K562 (cell line): ENCODE measurements at regions of chr1 and their contacts with region 1.

Region 1: GRCh38 chr1:26717017-26717491 is 21.2 kb downstream of the ARID1A start:
- DNase-seq: peak in 2 of 4 experiments; percentile 35 to 58
- ATAC-seq: peak; percentile 1; the same call in 2 of the 3 replicates
- H3K4me3 ChIP-seq: no peak overlapping the region
- H3K27ac ChIP-seq: peak overlapping the region; percentile 2
- H3K4me1 ChIP-seq: peaks cover 48 to 75% of the 10 kb centered on the region in 2 experiments
- H3K27me3 ChIP-seq: no peaks in the 10 kb centered on the region
- CTCF ChIP-seq: no peak
- EP300 ChIP-seq: peak; percentile 86
- POLR2A ChIP-seq: no peak
- RAD21 ChIP-seq: no peak

Region 2: DNA sequence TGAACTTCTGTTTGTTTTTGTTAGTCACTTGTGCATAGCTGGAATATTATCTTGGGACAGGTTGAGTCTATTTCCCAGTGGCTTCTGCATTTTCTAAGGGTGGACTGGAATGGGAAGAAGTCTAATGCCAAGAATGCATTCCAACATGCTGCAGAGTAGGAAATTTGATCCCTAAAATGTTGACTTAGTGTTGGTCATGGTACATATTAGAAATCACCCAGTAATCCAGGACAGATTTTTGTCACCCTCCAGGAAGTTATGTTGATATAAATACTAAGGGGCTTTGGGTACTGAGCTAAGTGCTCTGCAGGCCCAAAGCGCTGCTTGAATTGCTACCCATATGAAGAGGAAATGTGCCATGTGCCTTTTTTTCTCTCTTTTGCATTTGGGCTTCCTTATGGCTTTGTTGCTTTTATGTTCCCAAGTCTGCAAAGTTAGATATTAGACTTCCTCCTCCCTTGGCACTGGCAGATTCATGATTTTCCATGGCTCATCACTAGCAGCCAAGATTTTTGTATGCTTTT is 11.2 kb before region 1 on chr1:
- CTCF ChIA-PET with region 1: no interaction called
- POLR2A ChIA-PET with region 1: interaction called, 301 read pairs
- in situ Hi-C with region 1: no loop called
- intact Hi-C with region 1: no loop called
- DNase-seq: no peak
- ATAC-seq: no peak
- H3K4me3 ChIP-seq: no peak overlapping the region
- H3K27ac ChIP-seq: peak overlapping the region; percentile 40; the same call in 1 of the 3 replicates
- H3K4me1 ChIP-seq: peaks cover 19 to 52% of the 10 kb centered on the region in 2 experiments; a peak in 4 of 5 replicates
- H3K27me3 ChIP-seq: no peaks in the 10 kb centered on the region
- CTCF ChIP-seq: no peak
- EP300 ChIP-seq: no peak
- POLR2A ChIP-seq: no peak
- RAD21 ChIP-seq: no peak